Activated CD4-positive, alpha-beta memory T cell treated with anti-CD3 and anti-CD28 coated beads for 36 hours (primary cell): ENCODE measurements at regions of chr4 and their contacts with region 1.

Region 1: DNA sequence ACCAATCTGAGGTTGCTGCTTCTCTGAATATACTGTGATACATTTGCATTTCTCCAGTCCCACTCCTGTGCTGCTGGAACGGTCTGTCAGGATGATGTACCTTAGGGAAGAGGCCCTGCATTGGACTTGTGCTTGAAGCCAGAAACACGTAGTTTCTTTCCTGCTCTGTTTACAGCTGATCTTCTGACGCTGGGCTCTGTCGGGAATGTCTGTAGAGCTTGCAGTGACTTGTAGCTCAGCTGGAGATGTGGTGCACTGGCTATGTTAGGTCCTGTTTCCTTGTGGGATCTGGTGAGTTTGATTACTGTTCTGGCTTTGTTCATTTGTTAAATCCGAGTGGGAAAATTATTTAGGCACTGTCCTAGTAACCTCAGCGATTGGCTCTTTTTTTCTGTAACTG is 137.2 kb upstream of the WDR1 start:
- DNase-seq: no peak
- H3K4me3 Mint-ChIP-seq: no peak overlapping the region
- H3K27ac Mint-ChIP-seq: no peak overlapping the region
- H3K4me1 Mint-ChIP-seq: no peaks in the 10 kb centered on the region
- H3K27me3 Mint-ChIP-seq: peaks cover 5% of the 10 kb centered on the region

Region 2: GRCh38 chr4:10530137-10530786 is 276.5 kb after region 1 on chr4:
- CTCF ChIA-PET with region 1: no interaction called
- POLR2A ChIA-PET with region 1: no interaction called
- intact Hi-C with region 1: loop called (anchors 10 kb)
- DNase-seq: no peak
- H3K4me3 Mint-ChIP-seq: no peak overlapping the region
- H3K27ac Mint-ChIP-seq: no peak overlapping the region
- H3K4me1 Mint-ChIP-seq: no peaks in the 10 kb centered on the region
- H3K27me3 Mint-ChIP-seq: peaks cover 4% of the 10 kb centered on the region